GM10248 (cell line): ENCODE measurements at regions of chr7 and their contacts with region 1.

Region 1: GRCh38 chr7:78746301-78746700 is 707.2 kb downstream of the MAGI2 start:
- DNase-seq: no peak
- CTCF ChIP-seq: no peak

Region 2: GRCh38 chr7:78760620-78761355 is 14.5 kb after region 1 on chr7:
- CTCF ChIA-PET with region 1: interaction called, 12 read pairs
- POLR2A ChIA-PET with region 1: no interaction called
- DNase-seq: no peak
- CTCF ChIP-seq: no peak

Region 3: DNA sequence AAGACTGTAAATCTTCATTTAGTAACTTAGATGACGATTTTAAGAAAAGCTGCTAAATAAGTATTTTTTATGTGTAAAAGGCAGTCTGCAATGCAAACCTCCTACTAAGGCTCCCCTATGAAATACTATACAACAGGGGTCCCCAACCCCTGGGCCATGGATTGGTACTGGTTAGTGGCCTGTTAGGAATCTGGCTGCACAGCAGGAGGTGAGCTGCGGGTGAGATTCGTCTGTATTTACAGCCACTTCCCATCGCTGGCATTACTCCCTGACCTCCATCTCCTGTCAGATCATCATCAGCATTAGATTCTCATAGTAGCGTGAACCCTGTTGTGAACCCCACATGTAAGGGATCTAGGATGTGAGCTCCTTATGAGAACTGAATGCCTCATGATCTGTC is 126.8 kb after region 1 on chr7:
- CTCF ChIA-PET with region 1: no interaction called
- POLR2A ChIA-PET with region 1: no interaction called
- DNase-seq: no peak
- CTCF ChIP-seq: no peak

Region 4: DNA sequence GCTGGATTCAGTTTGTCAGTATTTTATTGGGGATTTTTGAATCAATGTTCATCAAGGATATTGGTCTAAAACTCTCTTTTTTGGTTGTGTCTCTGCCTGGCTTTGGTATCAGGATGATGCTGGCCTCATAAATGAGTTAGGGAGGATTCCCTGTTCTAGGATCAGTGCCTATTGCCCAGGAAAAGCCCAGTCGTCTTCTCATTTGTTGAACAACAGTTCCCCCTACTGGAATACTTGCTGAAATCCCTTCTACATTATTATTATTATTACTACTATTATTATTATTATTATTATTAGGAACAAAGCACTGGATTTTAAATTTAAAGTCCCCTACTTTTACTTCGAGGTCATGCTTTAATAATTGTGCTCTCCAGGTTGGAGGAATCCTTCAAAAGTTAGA is 178.3 kb after region 1 on chr7:
- CTCF ChIA-PET with region 1: no interaction called
- POLR2A ChIA-PET with region 1: no interaction called
- DNase-seq: no peak
- CTCF ChIP-seq: no peak